PC-3 (cell line): ENCODE measurements at regions of chr22 and their contacts with region 1.

Region 1: DNA sequence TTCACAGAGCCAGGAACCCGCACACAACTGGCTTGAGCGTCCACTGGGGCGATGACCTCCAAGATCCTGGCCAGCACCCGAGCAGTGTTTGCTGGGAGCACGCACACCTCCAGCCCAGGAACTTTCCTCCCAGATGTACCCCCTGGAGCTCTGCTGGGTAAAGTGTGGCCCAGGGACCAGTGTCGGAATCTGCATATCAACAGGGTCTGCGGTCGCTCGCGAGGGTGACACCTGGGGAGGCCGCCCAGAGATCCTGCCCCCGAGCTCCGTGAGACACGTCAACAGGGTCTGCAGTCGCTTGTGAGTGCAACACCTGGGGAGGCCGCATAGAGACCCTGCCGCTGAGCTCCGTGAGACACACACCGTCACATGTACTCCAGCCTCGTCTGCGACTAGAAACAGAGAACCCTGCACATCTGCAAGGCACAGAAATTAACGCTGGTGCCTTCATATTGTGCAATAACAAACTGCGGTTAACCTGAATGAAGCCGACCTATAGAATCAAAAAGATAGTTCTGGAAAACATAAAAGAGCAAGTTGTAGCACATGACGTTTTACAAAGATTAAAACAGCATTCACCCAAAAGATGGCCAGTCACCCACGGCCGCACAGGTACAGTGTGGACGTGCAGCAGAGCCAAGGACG is 172.4 kb downstream of the BRD1 start:
- DNase-seq: no peak
- ATAC-seq: no peak
- H3K4me3 ChIP-seq: no peak overlapping the region
- H3K27ac ChIP-seq: no peak overlapping the region
- H3K4me1 ChIP-seq: no peaks in the 10 kb centered on the region
- H3K27me3 ChIP-seq: peaks cover 71% of the 10 kb centered on the region
- CTCF ChIP-seq: no peak

Region 2: GRCh38 chr22:49628391-49629260 is 26.7 kb before region 1 on chr22:
- CTCF ChIA-PET with region 1: no interaction called
- POLR2A ChIA-PET with region 1: no interaction called
- intact Hi-C with region 1: no loop called
- DNase-seq: no peak
- ATAC-seq: no peak
- H3K4me3 ChIP-seq: no peak overlapping the region
- H3K27ac ChIP-seq: no peak overlapping the region
- H3K4me1 ChIP-seq: no peaks in the 10 kb centered on the region
- H3K27me3 ChIP-seq: peaks cover 63% of the 10 kb centered on the region
- CTCF ChIP-seq: no peak

Region 3: GRCh38 chr22:49701380-49702067 is 46.2 kb after region 1 on chr22:
- CTCF ChIA-PET with region 1: no interaction called
- POLR2A ChIA-PET with region 1: interaction called, 11 read pairs
- intact Hi-C with region 1: no loop called
- DNase-seq: peak; percentile 5
- ATAC-seq: no peak
- H3K4me3 ChIP-seq: no peak overlapping the region
- H3K27ac ChIP-seq: no peak overlapping the region
- H3K4me1 ChIP-seq: no peaks in the 10 kb centered on the region
- H3K27me3 ChIP-seq: peaks cover 49% of the 10 kb centered on the region
- CTCF ChIP-seq: peak; percentile 67